Endothelial cell of umbilical vein (primary cell): ENCODE measurements at regions of chr11 and their contacts with region 1.

Region 1: DNA sequence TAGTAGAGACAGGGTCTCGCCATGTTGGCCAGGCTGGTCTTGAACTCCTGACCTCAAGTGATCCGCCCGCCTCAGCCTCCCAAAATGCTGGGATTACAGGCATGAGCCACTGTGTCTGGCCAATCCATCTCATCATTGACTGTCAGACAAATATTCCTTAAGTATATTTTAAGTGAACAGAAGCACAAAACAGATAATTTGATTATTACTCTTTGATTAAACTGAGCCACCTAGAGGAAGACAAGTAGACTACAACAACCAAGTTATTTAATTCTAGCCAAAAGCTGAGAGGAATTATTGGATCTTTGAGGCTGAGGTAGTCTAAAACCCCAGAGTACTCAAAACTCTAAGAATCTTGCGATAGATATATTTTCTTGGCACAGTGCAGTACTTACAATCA is 1.2 kb downstream of the ACRV1 start:
- DNase-seq: peak; percentile 30
- H3K4me3 ChIP-seq: no peak overlapping the region
- H3K27ac ChIP-seq: no peak overlapping the region
- H3K4me1 ChIP-seq: peaks cover 12% of the 10 kb centered on the region
- H3K27me3 ChIP-seq: no peaks in the 10 kb centered on the region
- CTCF ChIP-seq: peak in 1 of 2 donors; percentile 18
- POLR2A ChIP-seq: no peak

Region 2: GRCh38 chr11:125701858-125702621 is 22.6 kb after region 1 on chr11:
- CTCF ChIA-PET with region 1: interaction called, 10 read pairs
- POLR2A ChIA-PET with region 1: no interaction called
- dilution Hi-C with region 1: no loop called
- intact Hi-C with region 1: no loop called
- DNase-seq: no peak
- H3K4me3 ChIP-seq: no peak overlapping the region
- H3K27ac ChIP-seq: no peak overlapping the region
- H3K4me1 ChIP-seq: no peaks in the 10 kb centered on the region
- H3K27me3 ChIP-seq: peaks cover 1 to 4% of the 10 kb centered on the region in 2 experiments
- CTCF ChIP-seq: no peak
- POLR2A ChIP-seq: no peak